ENCODE measurements at regions of chr7 and their contacts with region 1.

Region 1: DNA sequence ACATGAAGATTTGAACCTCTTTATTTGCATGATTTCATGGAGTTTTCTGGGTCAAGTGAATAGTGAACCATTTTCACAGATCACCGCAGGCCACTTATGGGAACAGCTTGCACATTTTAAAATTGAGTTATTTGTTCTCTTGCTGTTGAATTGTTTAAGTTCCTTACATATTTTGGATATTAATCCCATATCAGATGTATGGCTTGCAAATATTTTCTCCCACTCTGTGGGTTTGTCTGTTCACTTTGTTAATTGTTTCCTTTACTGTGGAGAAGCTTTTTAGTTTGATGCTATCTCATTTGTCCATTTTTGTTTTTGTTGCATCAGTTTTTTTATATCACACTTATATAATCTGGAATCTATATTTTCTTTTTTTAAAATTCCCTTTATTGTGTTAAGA is 14.1 kb upstream of the ZC3HAV1L start:
- DNase-seq: no peak
- ATAC-seq: no peak
- H3K4me3 Mint-ChIP-seq: no peak overlapping the region
- H3K27ac Mint-ChIP-seq: peak overlapping the region; percentile 58
- H3K4me1 Mint-ChIP-seq: peaks cover 47% of the 10 kb centered on the region
- H3K27me3 Mint-ChIP-seq: no peaks in the 10 kb centered on the region
- CTCF ChIP-seq: no peak

Region 2: GRCh38 chr7:139068544-139069399 is 18.8 kb after region 1 on chr7:
- CTCF ChIA-PET with region 1: interaction called, 6 read pairs
- POLR2A ChIA-PET with region 1: interaction called, 10 read pairs
- intact Hi-C with region 1: no loop called
- DNase-seq: peak; percentile 52
- ATAC-seq: peak; percentile 50
- H3K4me3 Mint-ChIP-seq: no peak overlapping the region
- H3K27ac Mint-ChIP-seq: peak overlapping the region; percentile 73
- H3K4me1 Mint-ChIP-seq: peaks cover 54% of the 10 kb centered on the region
- H3K27me3 Mint-ChIP-seq: no peaks in the 10 kb centered on the region
- CTCF ChIP-seq: peak; percentile 37

Region 3: DNA sequence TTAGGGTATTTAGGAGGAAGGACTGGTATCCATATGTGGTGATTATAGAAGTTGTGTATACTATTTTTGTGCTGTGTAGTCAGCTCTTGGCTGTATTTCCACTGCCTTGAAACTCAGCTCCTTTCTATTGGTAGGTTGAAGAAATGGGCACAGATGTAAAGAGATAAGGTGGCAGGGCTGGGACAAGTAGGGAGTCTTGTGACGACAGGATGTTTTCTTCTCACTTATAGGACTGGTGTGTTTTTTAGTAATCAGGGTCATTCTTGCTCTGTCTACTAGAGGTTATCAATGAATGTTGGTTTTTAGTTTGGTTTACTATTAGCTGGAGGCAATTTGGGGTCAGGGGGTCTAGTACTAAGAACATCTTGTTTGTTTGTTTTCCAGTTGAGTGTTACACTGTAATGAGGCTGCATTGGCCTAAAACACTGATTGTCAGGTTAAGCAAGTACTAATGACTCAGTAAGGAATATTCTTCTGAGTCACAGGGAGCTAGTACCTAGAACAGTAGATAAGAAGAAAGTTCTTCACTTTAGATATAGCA is 192.9 kb after region 1 on chr7:
- CTCF ChIA-PET with region 1: no interaction called
- POLR2A ChIA-PET with region 1: no interaction called
- intact Hi-C with region 1: no loop called
- DNase-seq: no peak
- ATAC-seq: peak; percentile 55
- H3K4me3 Mint-ChIP-seq: no peak overlapping the region
- H3K27ac Mint-ChIP-seq: no peak overlapping the region
- H3K4me1 Mint-ChIP-seq: peaks cover 6% of the 10 kb centered on the region
- H3K27me3 Mint-ChIP-seq: no peaks in the 10 kb centered on the region
- CTCF ChIP-seq: no peak